Stomach (tissue), 19 donors: ENCODE measurements at regions of chr4 and their contacts with region 1.

Region 1: GRCh38 chr4:48578132-48578968 is 88.3 kb downstream of the ZAR1 start:
- DNase-seq: peak; percentile 60 to 88
- H3K4me3 ChIP-seq: no peak overlapping the region
- H3K27ac ChIP-seq: no peak overlapping the region
- H3K4me1 ChIP-seq: no peaks in the 10 kb centered on the region
- H3K27me3 ChIP-seq: no peaks in the 10 kb centered on the region
- CTCF ChIP-seq: peak in 5 of 7 experiments; percentile 80 to 95 (median 89)
- EP300 ChIP-seq: no peak
- POLR2A ChIP-seq: no peak

Region 2: GRCh38 chr4:48813964-48814363 is 235.6 kb after region 1 on chr4:
- intact Hi-C with region 1: no loop called
- DNase-seq: no peak
- H3K4me3 ChIP-seq: no peak overlapping the region
- H3K27ac ChIP-seq: no peak overlapping the region
- H3K4me1 ChIP-seq: peaks cover 0 to 11% (median 4%) of the 10 kb centered on the region in 4 donors
- H3K27me3 ChIP-seq: no peaks in the 10 kb centered on the region
- CTCF ChIP-seq: no peak
- EP300 ChIP-seq: no peak
- POLR2A ChIP-seq: no peak

Region 3: GRCh38 chr4:48963042-48963679 is 384.8 kb after region 1 on chr4:
- intact Hi-C with region 1: loop called (anchors 5 kb)
- DNase-seq: peak; percentile 74 to 94
- H3K4me3 ChIP-seq: no peak overlapping the region
- H3K27ac ChIP-seq: no peak overlapping the region
- H3K4me1 ChIP-seq: peaks cover 0 to 13% (median 0%) of the 10 kb centered on the region in 4 donors
- H3K27me3 ChIP-seq: no peaks in the 10 kb centered on the region
- CTCF ChIP-seq: peak in 5 of 7 experiments; percentile 87 to 95 (median 93)
- EP300 ChIP-seq: no peak
- POLR2A ChIP-seq: no peak